ENCODE measurements at regions of chr17 and their contacts with region 1.

Region 1: GRCh38 chr17:76397687-76398487 is 13.5 kb downstream of the SPHK1 start:
- DNase-seq: peak; percentile 80 to 98 (median 94)

Region 2: DNA sequence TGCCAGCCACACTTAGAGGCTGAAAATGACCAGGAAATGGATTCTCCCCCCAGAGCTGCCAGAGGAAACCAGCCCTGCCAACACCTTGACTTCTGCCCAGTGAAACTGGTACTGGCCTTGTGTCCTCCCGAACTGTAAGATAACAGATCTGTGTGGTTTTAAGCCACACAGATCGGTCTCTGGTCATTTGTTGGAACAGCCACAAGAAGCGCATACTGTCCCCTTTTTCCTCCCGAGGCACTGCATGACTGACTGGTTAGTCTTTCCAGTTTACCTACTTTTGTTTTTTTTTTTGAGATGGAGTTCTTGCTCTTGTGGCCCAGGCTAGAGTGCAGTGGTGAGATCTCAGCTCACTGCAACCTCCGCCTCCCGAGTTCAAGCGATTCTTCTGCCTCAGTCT is 95.3 kb before region 1 on chr17:
- intact Hi-C with region 1: loop called (anchors 1 kb)
- DNase-seq: peak in 1 of 10 donors; percentile 3

Measured in posterior cingulate gyrus (tissue), 11 donors.